Endothelial cell of umbilical vein (primary cell): ENCODE measurements at regions of chr12 and their contacts with region 1.

Region 1: GRCh38 chr12:50074936-50075807 is 10.0 kb upstream of the SMARCD1 start:
- DNase-seq: peak; percentile 82
- H3K4me3 ChIP-seq: no peak overlapping the region
- H3K27ac ChIP-seq: no peak overlapping the region
- H3K4me1 ChIP-seq: peaks cover 4% of the 10 kb centered on the region
- H3K27me3 ChIP-seq: no peaks in the 10 kb centered on the region
- CTCF ChIP-seq: peak; percentile 78 to 91
- POLR2A ChIP-seq: no peak

Region 2: DNA sequence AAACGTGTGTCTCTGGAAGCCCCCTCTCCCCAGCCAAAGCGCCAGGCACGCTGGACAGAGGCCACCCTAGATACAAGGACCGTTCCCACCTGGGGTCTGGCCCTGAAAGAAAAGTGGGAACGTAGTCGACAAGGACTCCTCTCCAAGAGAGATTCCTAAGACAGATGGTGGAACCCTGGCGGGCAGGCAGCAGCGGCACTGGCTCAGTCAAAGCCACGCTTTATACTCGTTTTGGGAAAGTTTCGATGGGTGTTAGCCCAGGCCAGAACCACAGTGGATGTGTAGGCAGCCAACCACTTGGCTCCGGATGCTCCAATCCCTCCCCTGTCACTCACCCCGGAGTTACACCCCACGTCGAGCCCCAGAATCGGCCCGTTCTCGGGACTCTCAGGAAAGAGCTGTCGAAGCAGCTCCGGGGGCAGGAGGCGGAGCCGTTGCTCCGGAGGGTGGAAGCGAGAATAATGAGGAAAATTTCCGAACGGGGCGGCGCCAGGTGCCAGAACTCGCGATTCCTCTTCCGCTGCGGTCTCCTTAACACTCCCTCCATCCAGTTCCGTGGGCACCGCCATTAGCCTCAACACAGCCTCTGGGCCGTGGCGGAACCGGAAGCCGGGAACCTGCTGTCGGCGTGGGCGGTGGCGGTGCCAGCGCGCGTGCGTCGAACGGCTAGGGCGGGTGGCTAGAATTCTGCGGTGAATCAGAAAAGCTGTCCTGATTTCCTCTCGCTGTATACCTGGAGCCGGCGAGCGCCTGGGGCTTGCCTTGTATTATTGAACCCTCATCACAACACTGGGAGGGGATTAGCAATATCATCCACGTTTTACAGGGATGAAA is 232.4 kb before region 1 on chr12 and contains the start of gene BCDIN3D:
- CTCF ChIA-PET with region 1: interaction called, 11 read pairs
- POLR2A ChIA-PET with region 1: interaction called, 3 read pairs
- dilution Hi-C with region 1: no loop called
- intact Hi-C with region 1: no loop called
- DNase-seq: peak; percentile 91
- H3K4me3 ChIP-seq: peak within 1 kb of the TSS; percentile 24 to 71 (median 71)
- H3K27ac ChIP-seq: peak within 1 kb of the TSS; percentile 50
- H3K4me1 ChIP-seq: peaks cover 12% of the 10 kb centered on the region
- H3K27me3 ChIP-seq: peaks cover 4 to 5% of the 10 kb centered on the region in 2 experiments
- CTCF ChIP-seq: no peak
- POLR2A ChIP-seq: peak; percentile 91
- total RNA-seq, gene BCDIN3D: 2.5 and 3.1 TPM in 2 replicates

Region 3: GRCh38 chr12:49967042-49967776 is 108.0 kb before region 1 on chr12:
- CTCF ChIA-PET with region 1: interaction called, 317 read pairs
- POLR2A ChIA-PET with region 1: no interaction called
- dilution Hi-C with region 1: loop called (anchors 25 kb)
- intact Hi-C with region 1: loop called (anchors 1 kb)
- DNase-seq: peak; percentile 79
- H3K4me3 ChIP-seq: peak overlapping the region in 2 of 3 experiments; percentile 14 to 24
- H3K27ac ChIP-seq: no peak overlapping the region
- H3K4me1 ChIP-seq: peaks cover 11% of the 10 kb centered on the region
- H3K27me3 ChIP-seq: peaks cover 16 to 18% of the 10 kb centered on the region in 2 experiments
- CTCF ChIP-seq: peak; percentile 76 to 98
- POLR2A ChIP-seq: no peak

Region 4: GRCh38 chr12:50006789-50007436 is 68.3 kb before region 1 on chr12:
- CTCF ChIA-PET with region 1: interaction called, 12 read pairs
- POLR2A ChIA-PET with region 1: no interaction called
- dilution Hi-C with region 1: no loop called
- intact Hi-C with region 1: no loop called
- DNase-seq: no peak
- H3K4me3 ChIP-seq: no peak overlapping the region
- H3K27ac ChIP-seq: no peak overlapping the region
- H3K4me1 ChIP-seq: peaks cover 3% of the 10 kb centered on the region
- H3K27me3 ChIP-seq: no peaks in the 10 kb centered on the region
- CTCF ChIP-seq: no peak
- POLR2A ChIP-seq: no peak

Region 5: GRCh38 chr12:50043854-50044253 is 31.3 kb before region 1 on chr12:
- CTCF ChIA-PET with region 1: interaction called, 133 read pairs
- POLR2A ChIA-PET with region 1: no interaction called
- dilution Hi-C with region 1: no loop called
- intact Hi-C with region 1: loop called (anchors 1 kb)
- DNase-seq: no peak
- H3K4me3 ChIP-seq: no peak overlapping the region
- H3K27ac ChIP-seq: no peak overlapping the region
- H3K4me1 ChIP-seq: no peaks in the 10 kb centered on the region
- H3K27me3 ChIP-seq: peaks cover 7 to 10% of the 10 kb centered on the region in 2 experiments
- CTCF ChIP-seq: no peak
- POLR2A ChIP-seq: no peak

Region 6: GRCh38 chr12:50132505-50133135 is 57.4 kb after region 1 on chr12:
- CTCF ChIA-PET with region 1: interaction called, 7 read pairs
- POLR2A ChIA-PET with region 1: no interaction called
- dilution Hi-C with region 1: no loop called
- intact Hi-C with region 1: loop called (anchors 1 kb)
- DNase-seq: no peak
- H3K4me3 ChIP-seq: no peak overlapping the region
- H3K27ac ChIP-seq: no peak overlapping the region
- H3K4me1 ChIP-seq: peaks cover 4% of the 10 kb centered on the region
- H3K27me3 ChIP-seq: no peaks in the 10 kb centered on the region
- CTCF ChIP-seq: peak in 1 of 2 donors; percentile 46
- POLR2A ChIP-seq: no peak

Region 7: DNA sequence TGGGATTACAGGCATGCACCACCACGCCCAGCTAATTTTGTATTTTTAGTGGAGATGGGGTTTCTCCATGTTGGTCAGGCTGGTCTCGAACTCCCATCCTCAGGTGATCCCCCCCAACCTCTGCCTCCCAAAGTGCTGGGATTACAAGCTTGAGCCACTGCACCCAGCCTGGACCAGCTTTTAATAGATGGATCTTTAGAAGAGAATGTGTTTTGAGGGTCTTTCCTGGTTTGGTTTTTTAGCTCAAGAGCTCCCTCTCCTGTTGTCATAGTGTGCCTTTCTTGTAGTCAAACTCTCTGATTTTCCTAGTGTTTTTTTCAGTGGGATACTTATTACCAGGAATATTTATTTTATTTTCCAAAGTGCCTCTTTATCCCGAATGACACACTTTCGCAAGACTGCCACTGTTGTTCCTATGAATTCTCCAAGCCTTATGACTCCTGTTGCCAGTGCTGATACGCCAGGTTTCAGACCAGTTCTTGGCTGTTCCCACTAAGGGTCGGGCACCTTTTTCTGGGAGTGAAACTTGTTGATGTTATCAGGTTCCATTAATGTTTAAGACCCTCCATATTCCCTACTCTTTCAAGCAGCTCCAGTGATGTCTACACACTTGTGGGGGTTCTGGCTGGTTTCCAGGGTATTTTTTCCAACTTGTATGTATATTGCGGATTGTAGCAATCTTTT is 239.6 kb after region 1 on chr12:
- CTCF ChIA-PET with region 1: interaction called, 33 read pairs
- POLR2A ChIA-PET with region 1: no interaction called
- dilution Hi-C with region 1: no loop called
- intact Hi-C with region 1: loop called (anchors 1 kb)
- DNase-seq: peak; percentile 70
- H3K4me3 ChIP-seq: no peak overlapping the region
- H3K27ac ChIP-seq: no peak overlapping the region
- H3K4me1 ChIP-seq: no peaks in the 10 kb centered on the region
- H3K27me3 ChIP-seq: no peaks in the 10 kb centered on the region
- CTCF ChIP-seq: peak; percentile 50 to 68
- POLR2A ChIP-seq: no peak